ENCODE measurements at regions of chr12 and their contacts with region 1.

Region 1: GRCh38 chr12:15856097-15856982 is 25.8 kb upstream of the STRAP start:
- DNase-seq: no peak
- H3K4me3 ChIP-seq: no peak overlapping the region
- H3K27ac ChIP-seq: peak overlapping the region in 1 of 2 experiments; percentile 49; a peak in 2 of 4 replicates
- H3K4me1 ChIP-seq: peaks cover 0 to 9% of the 10 kb centered on the region in 2 experiments; a peak in 1 of 4 replicates
- H3K27me3 ChIP-seq: no peaks in the 10 kb centered on the region
- CTCF ChIP-seq: peak; percentile 86
- EP300 ChIP-seq: no peak
- RAD21 ChIP-seq: peak; percentile 94

Region 2: GRCh38 chr12:15584366-15585041 is 271.8 kb before region 1 on chr12:
- CTCF ChIA-PET with region 1: interaction called, 98 read pairs
- POLR2A ChIA-PET with region 1: no interaction called
- DNase-seq: peak; percentile 5
- H3K4me3 ChIP-seq: no peak overlapping the region
- H3K27ac ChIP-seq: no peak overlapping the region
- H3K4me1 ChIP-seq: no peaks in the 10 kb centered on the region
- H3K27me3 ChIP-seq: no peaks in the 10 kb centered on the region
- CTCF ChIP-seq: peak; percentile 85
- EP300 ChIP-seq: no peak
- RAD21 ChIP-seq: peak; percentile 71

Region 3: DNA sequence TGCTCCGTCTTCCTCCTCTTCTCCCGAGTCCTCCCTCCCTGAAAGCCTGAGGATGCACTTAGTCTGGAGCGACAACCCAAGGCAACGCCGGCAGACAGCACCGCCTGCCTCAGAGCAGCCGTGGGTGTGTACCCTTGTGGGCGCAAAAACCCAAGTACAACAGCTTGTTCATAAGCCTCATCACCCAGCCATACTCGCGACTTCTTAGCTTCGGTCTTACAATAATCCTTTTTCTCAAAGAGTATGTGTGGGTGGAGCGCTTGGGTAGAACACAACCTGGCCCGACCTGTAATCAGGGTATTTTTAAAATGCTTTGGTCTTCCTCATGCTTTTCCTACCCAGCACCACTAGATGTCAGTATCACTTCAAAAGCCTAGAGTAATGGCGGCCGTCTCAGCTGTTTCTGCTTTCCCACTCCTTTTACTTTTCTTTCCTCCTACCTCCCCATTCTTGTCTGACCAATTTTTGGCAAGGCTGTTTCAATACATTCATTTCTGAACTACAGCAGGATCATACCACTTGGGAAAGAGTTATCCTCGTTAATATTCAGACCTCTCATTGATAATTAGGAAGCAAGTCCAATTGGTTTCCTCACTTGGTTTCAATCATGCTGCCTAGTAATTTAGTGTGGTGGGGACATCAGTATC is 266.0 kb before region 1 on chr12:
- CTCF ChIA-PET with region 1: interaction called, 98 read pairs
- POLR2A ChIA-PET with region 1: no interaction called
- DNase-seq: peak; percentile 67
- H3K4me3 ChIP-seq: peak overlapping the region in 1 of 2 experiments; percentile 25; a peak in 1 of 4 replicates
- H3K27ac ChIP-seq: peak overlapping the region in 1 of 2 experiments; percentile 12; a peak in 1 of 4 replicates
- H3K4me1 ChIP-seq: no peaks in the 10 kb centered on the region; a peak in 2 of 4 replicates
- H3K27me3 ChIP-seq: no peaks in the 10 kb centered on the region
- CTCF ChIP-seq: peak; percentile 92
- EP300 ChIP-seq: no peak
- RAD21 ChIP-seq: peak; percentile 91

Region 4: DNA sequence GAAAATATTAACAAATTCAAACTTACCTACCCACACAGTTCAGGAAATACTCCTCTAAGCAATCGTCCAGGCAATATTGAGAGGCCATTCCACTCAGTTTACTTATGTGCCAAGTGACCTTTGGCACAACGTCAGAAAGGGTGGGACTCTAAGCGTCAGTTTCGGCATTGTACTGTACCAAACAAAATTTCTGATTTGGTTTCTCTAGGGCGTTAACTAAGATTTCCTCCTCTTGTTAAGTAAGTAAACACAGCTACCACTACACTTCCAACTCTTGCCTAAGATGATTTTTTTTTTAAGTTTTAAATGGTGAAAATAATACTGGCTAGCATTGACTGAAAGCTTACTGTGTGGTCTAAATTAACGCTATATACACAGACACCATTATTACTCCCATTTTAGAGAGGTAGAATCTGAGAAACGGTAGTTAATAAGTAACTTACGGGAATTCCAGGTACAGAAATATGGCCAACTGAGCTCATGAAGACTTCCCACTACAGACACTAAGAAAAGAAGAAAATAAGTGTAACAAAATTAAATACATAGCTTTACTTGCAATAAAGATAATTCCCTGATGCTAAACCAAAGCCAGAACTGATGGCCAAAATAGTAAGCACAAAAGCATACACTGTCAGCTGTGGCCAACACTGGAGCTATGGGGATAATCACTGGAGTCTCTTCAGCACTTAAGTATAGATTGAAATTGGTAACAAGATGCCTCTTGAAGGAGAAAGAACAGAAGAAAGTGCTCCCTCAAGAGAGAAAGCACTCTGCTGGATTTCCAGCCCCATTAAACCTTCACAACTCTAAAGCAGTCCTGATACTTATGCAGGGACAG is 143.3 kb before region 1 on chr12:
- CTCF ChIA-PET with region 1: no interaction called
- POLR2A ChIA-PET with region 1: no interaction called
- DNase-seq: no peak
- H3K4me3 ChIP-seq: no peak overlapping the region
- H3K27ac ChIP-seq: no peak overlapping the region
- H3K4me1 ChIP-seq: 0 out of 4 replicates have a peak, but pooled peaks cover 0 to 6% of the 10 kb centered on the region in 2 experiments
- H3K27me3 ChIP-seq: no peaks in the 10 kb centered on the region
- CTCF ChIP-seq: no peak
- EP300 ChIP-seq: no peak
- RAD21 ChIP-seq: no peak

Region 5: GRCh38 chr12:15772405-15773018 is 83.8 kb before region 1 on chr12:
- CTCF ChIA-PET with region 1: interaction called, 31 read pairs
- POLR2A ChIA-PET with region 1: no interaction called
- DNase-seq: peak; percentile 4
- H3K4me3 ChIP-seq: no peak overlapping the region
- H3K27ac ChIP-seq: no peak overlapping the region
- H3K4me1 ChIP-seq: peaks cover 0 to 34% of the 10 kb centered on the region in 2 experiments; a peak in 1 of 4 replicates
- H3K27me3 ChIP-seq: no peaks in the 10 kb centered on the region
- CTCF ChIP-seq: peak; percentile 62
- EP300 ChIP-seq: no peak
- RAD21 ChIP-seq: peak; percentile 59

Region 6: DNA sequence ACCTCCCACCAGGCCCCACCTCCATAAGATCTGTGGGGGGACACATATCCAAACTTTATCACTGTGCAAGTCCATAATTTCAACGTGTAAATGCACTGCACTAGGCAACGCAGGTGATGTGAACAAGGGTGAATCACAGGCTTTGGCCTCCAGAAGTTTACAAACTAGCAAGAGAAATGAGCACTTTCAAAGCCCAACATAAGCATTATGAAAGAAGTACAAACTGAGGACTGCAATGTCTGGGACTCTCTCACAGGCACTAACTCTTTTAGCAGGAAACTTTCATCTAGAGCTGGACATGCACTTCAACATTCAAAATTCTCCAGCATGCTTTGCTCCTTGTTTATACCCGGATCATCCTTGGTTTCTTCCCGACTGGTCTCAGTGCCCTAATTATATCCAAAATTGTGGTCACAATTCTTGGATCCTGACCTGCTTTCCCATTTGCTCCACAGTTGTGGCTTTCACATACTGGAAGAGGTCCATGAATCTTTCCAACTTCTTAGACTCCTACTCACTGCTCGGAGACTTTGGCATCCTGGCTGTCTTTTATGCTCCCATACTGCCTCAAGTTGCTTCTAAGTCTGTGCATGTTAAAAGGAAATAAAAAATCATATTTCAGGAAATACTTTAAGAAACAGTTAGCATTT is 19.1 kb before region 1 on chr12:
- CTCF ChIA-PET with region 1: no interaction called
- POLR2A ChIA-PET with region 1: no interaction called
- DNase-seq: no peak
- H3K4me3 ChIP-seq: no peak overlapping the region
- H3K27ac ChIP-seq: peak overlapping the region in 1 of 2 experiments; percentile 46; a peak in 2 of 4 replicates
- H3K4me1 ChIP-seq: peaks cover 0 to 6% of the 10 kb centered on the region in 2 experiments; a peak in 1 of 4 replicates
- H3K27me3 ChIP-seq: no peaks in the 10 kb centered on the region
- CTCF ChIP-seq: no peak
- EP300 ChIP-seq: no peak
- RAD21 ChIP-seq: no peak

Region 7: DNA sequence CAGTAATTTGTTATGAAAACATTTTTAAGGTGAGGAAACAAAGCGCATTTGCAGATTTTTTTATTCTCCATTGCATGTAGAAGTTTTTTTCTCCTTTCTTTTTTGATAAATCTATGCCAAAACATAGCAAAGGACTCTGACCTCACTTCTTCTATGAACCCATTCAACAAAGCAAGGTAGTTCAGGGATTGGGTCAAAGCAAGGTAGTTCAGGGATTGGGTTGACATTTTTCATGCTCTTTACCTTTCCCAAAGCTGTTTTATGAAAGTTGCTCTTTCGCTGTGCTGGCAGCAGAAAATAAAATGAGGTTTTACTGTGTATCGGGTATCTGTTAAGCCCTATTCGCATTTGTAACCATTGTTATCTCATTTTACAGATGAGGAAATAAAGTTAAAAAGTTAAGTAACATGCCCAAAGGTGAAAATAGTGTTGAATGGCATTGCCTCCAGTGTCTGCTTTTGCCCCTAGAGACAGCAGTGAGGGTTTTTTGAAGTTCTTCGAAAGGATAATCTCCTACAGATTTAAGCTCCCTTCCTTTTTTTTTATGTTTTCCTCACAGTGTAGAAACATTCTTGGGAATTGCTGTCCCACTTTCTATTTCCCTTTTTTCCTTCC is 36.4 kb after region 1 on chr12:
- CTCF ChIA-PET with region 1: no interaction called
- POLR2A ChIA-PET with region 1: no interaction called
- DNase-seq: no peak
- H3K4me3 ChIP-seq: no peak overlapping the region
- H3K27ac ChIP-seq: no peak overlapping the region; a peak in 1 of 4 replicates
- H3K4me1 ChIP-seq: peaks cover 0 to 10% of the 10 kb centered on the region in 2 experiments; a peak in 2 of 4 replicates
- H3K27me3 ChIP-seq: no peaks in the 10 kb centered on the region
- CTCF ChIP-seq: no peak
- EP300 ChIP-seq: no peak
- RAD21 ChIP-seq: no peak

Measured in SK-N-SH (cell line).